ENCODE measurements at regions of chr7 and their contacts with region 1.

Region 1: GRCh38 chr7:29239638-29240037 is 45.1 kb downstream of the CHN2 start:
- DNase-seq: peak; percentile 42
- H3K4me3 Mint-ChIP-seq: no peak overlapping the region
- H3K27ac Mint-ChIP-seq: no peak overlapping the region
- H3K4me1 Mint-ChIP-seq: peaks cover 16% of the 10 kb centered on the region
- H3K27me3 Mint-ChIP-seq: peaks cover 5% of the 10 kb centered on the region

Region 2: GRCh38 chr7:29113384-29114103 is 126.1 kb before region 1 on chr7:
- CTCF ChIA-PET with region 1: no interaction called
- POLR2A ChIA-PET with region 1: no interaction called
- intact Hi-C with region 1: loop called (anchors 1 kb)
- DNase-seq: peak; percentile 36
- H3K4me3 Mint-ChIP-seq: no peak overlapping the region
- H3K27ac Mint-ChIP-seq: no peak overlapping the region
- H3K4me1 Mint-ChIP-seq: peaks cover 11% of the 10 kb centered on the region
- H3K27me3 Mint-ChIP-seq: peaks cover 22% of the 10 kb centered on the region

Region 3: DNA sequence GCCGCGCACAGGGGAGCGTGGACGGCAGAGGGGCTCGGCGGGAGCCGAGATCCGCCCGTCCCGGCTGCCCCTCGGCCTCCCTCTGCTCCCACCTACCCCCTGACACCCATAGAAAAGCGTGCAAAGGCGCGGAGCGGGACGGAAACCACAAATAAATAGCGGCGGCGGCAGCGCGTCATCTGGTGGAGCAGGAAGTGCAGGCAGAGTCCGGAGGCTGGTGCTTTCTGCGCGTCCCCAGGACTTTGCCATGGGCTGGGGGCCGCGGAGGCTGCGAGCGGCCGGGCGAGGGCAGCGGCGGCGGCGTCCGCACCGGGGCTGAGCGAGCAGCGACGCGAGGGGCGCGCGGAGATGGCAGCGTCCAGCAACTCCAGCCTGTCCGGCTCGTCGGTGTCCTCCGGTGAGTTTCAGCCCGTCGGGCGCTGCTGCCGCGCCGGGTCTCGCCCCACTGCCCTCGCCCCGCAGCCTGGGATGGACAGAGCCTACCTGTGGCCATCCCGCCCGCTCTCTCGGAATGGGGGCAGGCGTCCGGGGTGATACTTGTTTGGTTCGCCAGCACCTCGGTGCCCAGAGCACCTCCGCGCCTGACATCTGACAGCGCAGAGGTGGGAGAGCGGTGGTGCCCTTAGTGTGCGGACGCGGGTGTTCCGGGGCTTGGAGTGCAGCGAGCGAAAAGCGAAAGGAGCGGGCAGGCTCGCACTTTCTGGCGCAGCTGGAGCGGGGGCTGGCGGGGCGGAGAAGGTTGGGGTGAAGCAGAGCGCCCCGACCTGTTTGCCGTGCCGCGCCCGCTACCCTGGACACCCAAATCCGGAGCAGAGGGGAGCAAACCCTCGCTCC is 44.8 kb before region 1 on chr7 and contains the start of gene CHN2:
- CTCF ChIA-PET with region 1: interaction called, 6 read pairs
- POLR2A ChIA-PET with region 1: no interaction called
- intact Hi-C with region 1: loop called (anchors 1 kb)
- DNase-seq: peak; percentile 59
- H3K4me3 Mint-ChIP-seq: peak within 1 kb of the TSS; percentile 68
- H3K27ac Mint-ChIP-seq: no peak within 1 kb of the TSS
- H3K4me1 Mint-ChIP-seq: peaks cover 12% of the 10 kb centered on the region
- H3K27me3 Mint-ChIP-seq: peaks cover 31% of the 10 kb centered on the region
- total RNA-seq, gene CHN2: 0.53 to 0.69 TPM

Region 4: DNA sequence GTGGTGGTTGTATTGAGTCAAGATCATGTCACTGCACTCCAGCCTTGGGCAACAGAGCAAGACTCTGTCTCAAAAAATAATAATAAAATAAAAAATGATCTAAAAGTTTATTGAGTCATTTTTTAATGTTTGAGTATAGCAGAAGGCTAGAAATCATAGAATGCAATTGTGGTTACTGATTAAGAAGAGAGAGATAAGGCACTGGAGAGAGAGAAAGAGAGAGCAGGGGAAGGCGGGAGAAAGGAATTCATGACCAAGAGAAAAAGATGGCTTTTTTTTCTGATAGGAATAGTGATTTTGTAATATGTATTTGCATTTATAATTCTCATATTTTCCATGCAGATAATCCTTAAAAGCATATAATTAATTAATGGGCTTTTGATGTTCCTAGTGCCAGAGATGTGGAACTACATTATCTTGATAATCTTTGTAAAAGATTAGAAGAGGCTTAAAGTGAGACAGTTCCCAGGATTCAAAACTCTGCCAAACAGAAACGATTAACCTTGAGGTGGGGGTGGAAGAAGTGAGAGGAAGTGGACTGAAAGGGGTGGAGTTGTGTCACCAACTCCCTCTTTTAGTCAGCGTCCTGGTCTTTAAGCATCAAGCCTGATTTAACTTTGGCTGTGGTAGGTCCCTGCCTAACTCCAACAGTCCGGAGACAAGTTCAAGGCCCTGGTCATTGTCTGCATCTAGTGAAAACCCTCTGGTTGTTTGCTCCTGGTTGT is 31.1 kb after region 1 on chr7:
- CTCF ChIA-PET with region 1: no interaction called
- POLR2A ChIA-PET with region 1: no interaction called
- intact Hi-C with region 1: loop called (anchors 1 kb)
- DNase-seq: peak; percentile 38
- H3K4me3 Mint-ChIP-seq: no peak overlapping the region
- H3K27ac Mint-ChIP-seq: no peak overlapping the region
- H3K4me1 Mint-ChIP-seq: peaks cover 20% of the 10 kb centered on the region
- H3K27me3 Mint-ChIP-seq: peaks cover under 1% of the 10 kb centered on the region

Region 5: DNA sequence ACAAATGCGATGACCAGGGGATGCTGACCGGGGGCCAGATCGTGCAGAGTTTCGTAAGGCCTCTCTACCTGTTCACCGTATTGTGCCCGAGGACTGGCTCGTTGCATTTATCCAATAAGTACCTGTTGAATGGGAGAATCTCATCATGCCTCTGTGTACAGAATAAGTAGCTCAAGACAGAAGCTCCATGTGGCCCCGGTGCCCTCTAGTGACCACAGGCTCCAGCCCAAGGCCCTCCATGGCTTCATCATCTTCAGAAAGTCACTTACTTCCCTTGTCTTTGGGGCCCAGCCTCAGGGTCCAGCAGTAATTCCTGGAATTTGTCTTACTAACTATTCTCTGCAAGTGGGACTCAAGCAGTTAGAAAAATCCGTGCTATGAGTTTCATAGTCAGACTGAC is 106.0 kb after region 1 on chr7:
- CTCF ChIA-PET with region 1: no interaction called
- POLR2A ChIA-PET with region 1: no interaction called
- intact Hi-C with region 1: loop called (anchors 2 kb)
- DNase-seq: peak; percentile 35
- H3K4me3 Mint-ChIP-seq: no peak overlapping the region
- H3K27ac Mint-ChIP-seq: no peak overlapping the region
- H3K4me1 Mint-ChIP-seq: no peaks in the 10 kb centered on the region
- H3K27me3 Mint-ChIP-seq: no peaks in the 10 kb centered on the region

Region 6: DNA sequence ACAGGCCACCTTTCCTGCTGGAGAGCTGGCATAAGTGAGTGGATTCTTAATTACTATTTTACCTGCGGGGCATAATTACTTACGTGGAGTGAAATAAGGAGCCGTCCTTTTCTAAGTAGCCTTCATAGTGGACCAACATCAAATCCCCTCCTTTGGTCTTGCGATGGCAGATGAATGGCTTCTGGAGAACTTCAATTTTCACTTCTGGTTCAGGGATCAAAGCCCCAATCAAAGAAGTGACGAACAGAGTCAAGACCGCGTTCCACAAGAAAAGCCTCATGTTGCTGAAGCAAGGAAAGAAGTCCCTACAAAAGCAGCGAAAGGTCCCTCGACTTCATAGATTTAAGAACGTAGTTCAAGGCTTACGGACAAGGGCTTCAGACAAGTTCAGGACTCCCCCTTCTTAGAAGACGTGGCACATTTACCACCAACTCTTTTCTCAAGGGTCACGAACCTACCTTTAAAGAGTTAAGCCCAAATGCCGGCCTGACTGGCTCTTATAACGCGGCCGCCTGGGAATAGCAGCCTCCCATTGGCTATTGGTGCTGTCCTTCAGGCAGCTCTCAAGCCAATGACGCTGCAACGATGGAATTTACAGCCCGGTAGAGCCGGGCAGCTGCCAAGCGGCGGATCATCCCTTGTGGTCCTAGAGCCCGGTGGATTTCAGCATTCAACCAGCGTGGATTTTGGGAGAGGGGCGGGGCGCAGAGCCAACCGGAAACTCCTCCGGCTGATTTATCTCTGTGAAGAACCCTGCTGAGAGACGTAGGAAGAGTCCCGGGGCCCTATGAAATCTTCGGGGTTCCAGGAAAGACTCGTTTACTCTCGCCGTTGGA is 786.8 kb after region 1 on chr7 and contains the start of gene FKBP14:
- CTCF ChIA-PET with region 1: no interaction called
- POLR2A ChIA-PET with region 1: no interaction called
- intact Hi-C with region 1: loop called (anchors 2 kb)
- DNase-seq: peak; percentile 96
- H3K4me3 Mint-ChIP-seq: no peak within 1 kb of the TSS
- H3K27ac Mint-ChIP-seq: peak within 1 kb of the TSS; percentile 75
- H3K4me1 Mint-ChIP-seq: peaks cover 32% of the 10 kb centered on the region
- H3K27me3 Mint-ChIP-seq: no peaks in the 10 kb centered on the region
- total RNA-seq, gene FKBP14: 6.3 to 7.9 TPM

Measured in activated CD4-positive, alpha-beta memory T cell treated with anti-CD3 and anti-CD28 coated beads for 36 hours (primary cell).